ENCODE measurements at regions of chr20 and their contacts with region 1.

Region 1: GRCh38 chr20:53623454-53624211 is 30.0 kb upstream of the ZNF217 start:
- DNase-seq: no peak
- ATAC-seq: peak; percentile 78
- H3K4me3 ChIP-seq: peak overlapping the region; percentile 0 to 44
- H3K27ac ChIP-seq: peak overlapping the region; percentile 93
- H3K4me1 ChIP-seq: peaks cover 47 to 50% of the 10 kb centered on the region in 2 experiments
- H3K27me3 ChIP-seq: no peaks in the 10 kb centered on the region
- CTCF ChIP-seq: no peak
- POLR2A ChIP-seq: no peak
- RAD21 ChIP-seq: no peak

Region 2: GRCh38 chr20:53611449-53611894 is 12.2 kb before region 1 on chr20:
- CTCF ChIA-PET with region 1: no interaction called
- POLR2A ChIA-PET with region 1: interaction called, 64 read pairs
- RAD21 ChIA-PET with region 1: interaction called in 1 of 2 experiments, 5 read pairs
- intact Hi-C with region 1: no loop called
- DNase-seq: peak; percentile 78
- ATAC-seq: peak; percentile 82
- H3K4me3 ChIP-seq: peak overlapping the region; percentile 15 to 47
- H3K27ac ChIP-seq: peak overlapping the region; percentile 82
- H3K4me1 ChIP-seq: peaks cover 39 to 71% of the 10 kb centered on the region in 2 experiments
- H3K27me3 ChIP-seq: no peaks in the 10 kb centered on the region
- CTCF ChIP-seq: no peak
- POLR2A ChIP-seq: no peak
- RAD21 ChIP-seq: peak; percentile 25; the same call in 1 of the 2 replicates

Region 3: GRCh38 chr20:53643031-53643832 is 19.6 kb after region 1 on chr20:
- CTCF ChIA-PET with region 1: no interaction called
- POLR2A ChIA-PET with region 1: interaction called, 20 read pairs
- RAD21 ChIA-PET with region 1: no interaction called
- intact Hi-C with region 1: no loop called
- DNase-seq: peak; percentile 57
- ATAC-seq: peak; percentile 73
- H3K4me3 ChIP-seq: peak overlapping the region in 1 of 2 experiments; percentile 35; a peak in 2 of 4 replicates
- H3K27ac ChIP-seq: peak overlapping the region; percentile 90
- H3K4me1 ChIP-seq: peaks cover 19 to 23% of the 10 kb centered on the region in 2 experiments
- H3K27me3 ChIP-seq: no peaks in the 10 kb centered on the region
- CTCF ChIP-seq: no peak
- POLR2A ChIP-seq: no peak
- RAD21 ChIP-seq: no peak; the same call in 1 of the 2 replicates

Region 4: GRCh38 chr20:53752971-53753879 is 129.6 kb after region 1 on chr20:
- CTCF ChIA-PET with region 1: no interaction called
- POLR2A ChIA-PET with region 1: interaction called, 28 read pairs
- RAD21 ChIA-PET with region 1: interaction called in 1 of 2 experiments, 3 read pairs
- intact Hi-C with region 1: no loop called
- DNase-seq: no peak
- ATAC-seq: peak; percentile 60
- H3K4me3 ChIP-seq: peak overlapping the region; percentile 29 to 55
- H3K27ac ChIP-seq: peak overlapping the region; percentile 81
- H3K4me1 ChIP-seq: peaks cover 37 to 61% of the 10 kb centered on the region in 2 experiments
- H3K27me3 ChIP-seq: no peaks in the 10 kb centered on the region
- CTCF ChIP-seq: no peak
- POLR2A ChIP-seq: no peak
- RAD21 ChIP-seq: no peak